ENCODE measurements at regions of chr14 and their contacts with region 1.

Region 1: DNA sequence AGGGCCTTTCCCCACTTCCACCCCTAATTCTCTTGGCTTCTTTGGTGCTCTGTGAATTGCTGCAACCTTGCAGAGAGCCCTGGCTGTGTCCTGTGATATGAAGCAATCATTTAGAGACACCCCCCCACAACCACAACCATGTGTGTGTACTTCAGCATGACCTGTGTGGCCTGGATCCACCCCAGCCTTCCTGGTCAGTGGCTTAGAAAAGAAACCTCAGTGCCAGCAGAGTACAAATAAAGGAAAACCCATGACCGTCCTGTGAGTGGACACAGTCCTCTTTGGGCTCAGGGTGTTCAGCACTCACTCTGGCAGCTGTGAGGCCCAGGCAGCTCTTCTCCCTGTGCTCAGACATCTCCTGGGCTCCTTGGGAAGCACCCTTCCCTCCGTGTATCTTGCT is 206.6 kb upstream of the DIO3 start:
- DNase-seq: no peak
- H3K4me3 ChIP-seq: no peak overlapping the region
- CTCF ChIP-seq: no peak

Region 2: GRCh38 chr14:101288436-101289229 is 66.1 kb before region 1 on chr14:
- in situ Hi-C with region 1: loop called (anchors 5 kb)
- DNase-seq: no peak
- H3K4me3 ChIP-seq: no peak overlapping the region
- CTCF ChIP-seq: no peak

Region 3: DNA sequence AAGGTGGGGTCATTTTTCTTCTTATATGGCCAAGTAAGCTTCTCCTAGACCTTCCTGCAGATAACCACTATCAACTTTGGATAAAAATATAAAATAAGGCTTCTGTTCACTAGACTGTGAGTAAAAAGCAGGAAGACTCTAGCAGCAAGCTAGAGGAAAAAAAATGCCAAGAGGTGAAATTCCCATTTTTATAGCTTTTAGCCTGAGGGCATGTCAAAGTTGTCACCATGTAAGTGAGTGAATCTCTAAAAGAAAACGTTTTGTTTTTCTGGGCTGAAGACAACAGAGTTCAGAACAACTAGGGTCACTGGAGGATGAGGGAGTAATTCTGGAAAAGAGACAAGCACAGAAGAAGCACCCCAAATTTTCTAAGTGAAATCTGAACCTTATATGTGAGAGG is 62.7 kb after region 1 on chr14:
- in situ Hi-C with region 1: loop called (anchors 5 kb)
- DNase-seq: no peak
- H3K4me3 ChIP-seq: no peak overlapping the region
- CTCF ChIP-seq: no peak